ENCODE measurements at regions of chr1 and their contacts with region 1.

Region 1: DNA sequence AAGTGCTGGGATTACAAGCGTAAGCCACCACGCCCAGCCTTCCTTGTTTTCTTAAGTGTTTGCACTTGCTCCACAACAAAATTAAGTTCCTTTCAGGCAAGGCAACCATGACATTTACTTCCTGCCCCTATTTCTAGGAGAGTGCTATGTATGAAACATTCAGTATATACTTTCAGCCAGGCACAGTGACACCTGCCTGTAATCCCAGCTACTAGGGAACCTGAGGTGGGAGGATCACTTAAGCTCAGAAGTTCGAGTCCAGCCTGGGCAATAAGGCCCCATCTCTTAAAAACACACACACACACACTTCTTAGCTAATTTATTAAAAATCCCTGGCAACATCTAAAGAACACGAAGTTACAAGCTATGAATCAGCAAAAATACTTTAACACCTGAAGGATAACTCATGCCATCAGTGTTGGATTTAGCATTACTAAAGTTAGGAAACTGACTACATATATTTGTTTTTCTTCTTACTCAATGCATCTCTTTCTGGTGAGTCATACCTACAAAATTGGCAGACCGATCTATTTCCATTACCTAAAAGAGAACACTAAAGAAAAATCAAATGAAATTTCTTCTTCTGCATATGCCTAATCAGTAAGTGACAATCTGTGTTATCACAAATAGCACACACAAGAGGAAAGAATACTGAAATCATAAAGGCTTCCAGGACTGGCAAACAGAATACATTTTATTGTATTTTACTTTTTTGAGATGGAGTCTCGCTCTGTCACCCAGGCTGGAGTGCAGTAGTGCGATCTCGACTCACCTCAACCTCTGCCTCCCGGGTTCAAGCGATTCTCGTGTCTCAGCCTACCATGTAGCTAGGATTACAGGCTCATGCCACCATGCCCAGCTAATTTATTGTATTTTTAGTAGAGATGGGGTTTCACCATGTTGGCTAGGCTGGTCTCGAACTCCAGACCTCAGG is 41.5 kb downstream of the RNF115 start:
- DNase-seq: no peak
- H3K4me3 ChIP-seq: peak overlapping the region; percentile 41 to 62
- H3K27ac ChIP-seq: peak overlapping the region; percentile 80 to 87
- H3K4me1 ChIP-seq: peaks cover 0 to 15% of the 10 kb centered on the region in 2 donors
- H3K27me3 ChIP-seq: no peaks in the 10 kb centered on the region
- CTCF ChIP-seq: no peak

Region 2: DNA sequence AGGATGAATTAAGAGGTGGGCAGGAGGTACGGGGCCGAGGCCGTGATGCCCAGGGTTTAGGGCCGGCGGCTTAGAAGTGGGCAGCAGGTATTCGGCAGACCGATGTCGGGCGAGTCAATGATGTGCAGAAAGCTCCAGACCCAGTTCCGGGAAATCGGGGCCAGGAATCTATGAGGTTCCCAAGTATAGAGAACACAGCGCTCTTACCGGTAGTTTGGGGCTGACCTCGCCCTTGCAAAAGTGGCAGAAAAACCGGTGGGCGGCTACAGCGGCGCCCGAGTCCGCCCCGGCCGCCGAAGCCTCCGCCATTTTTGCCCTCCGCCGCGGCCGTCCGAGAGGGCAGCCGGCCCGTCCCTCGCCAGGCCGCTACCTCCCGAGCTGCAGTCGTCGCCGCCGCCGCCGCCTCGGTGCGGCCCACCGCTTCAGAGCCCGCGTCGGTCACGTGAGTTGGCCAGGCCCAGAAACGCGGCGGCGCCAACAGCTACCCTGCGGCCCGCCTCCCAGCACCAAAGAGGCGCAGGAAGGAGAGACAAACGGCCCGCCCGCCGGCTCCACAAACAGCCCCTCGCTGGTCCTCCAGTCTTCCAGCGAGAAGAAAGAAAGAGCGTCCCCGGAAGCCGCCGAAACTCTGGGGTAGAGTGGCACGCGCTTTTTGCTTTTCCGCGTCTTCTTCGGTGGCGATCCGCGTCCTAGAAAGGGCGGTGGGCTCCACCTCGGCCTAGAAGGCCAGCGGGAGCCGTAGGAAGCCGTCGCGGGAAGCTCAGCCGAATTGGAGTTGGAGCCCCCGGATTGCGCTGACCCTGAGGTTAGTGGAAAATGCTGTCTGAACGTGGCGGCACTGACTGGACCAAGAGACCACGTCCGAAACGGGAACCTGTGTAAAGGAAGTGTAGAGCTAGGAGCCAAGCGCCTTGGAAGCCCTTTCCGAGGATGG is 41.4 kb after region 1 on chr1 and contains the starts of genes POLR3C and RNF115:
- intact Hi-C with region 1: loop called (anchors 5 kb)
- DNase-seq: peak; percentile 58 to 95
- H3K4me3 ChIP-seq: peak within 1 kb of the TSS; percentile 84 to 89
- H3K27ac ChIP-seq: peak within 1 kb of the TSS; percentile 95 to 96
- H3K4me1 ChIP-seq: peaks cover 0 to 17% of the 10 kb centered on the region in 2 donors
- H3K27me3 ChIP-seq: no peaks in the 10 kb centered on the region
- CTCF ChIP-seq: peak in 1 of 3 experiments; percentile 10
- total RNA-seq, gene POLR3C: 18.9 TPM
- total RNA-seq, gene RNF115: 16.5 TPM

Measured in ascending aorta (tissue), 2 donors.